GM10248 (cell line): ENCODE measurements at regions of chr2 and their contacts with region 1.

Region 1: DNA sequence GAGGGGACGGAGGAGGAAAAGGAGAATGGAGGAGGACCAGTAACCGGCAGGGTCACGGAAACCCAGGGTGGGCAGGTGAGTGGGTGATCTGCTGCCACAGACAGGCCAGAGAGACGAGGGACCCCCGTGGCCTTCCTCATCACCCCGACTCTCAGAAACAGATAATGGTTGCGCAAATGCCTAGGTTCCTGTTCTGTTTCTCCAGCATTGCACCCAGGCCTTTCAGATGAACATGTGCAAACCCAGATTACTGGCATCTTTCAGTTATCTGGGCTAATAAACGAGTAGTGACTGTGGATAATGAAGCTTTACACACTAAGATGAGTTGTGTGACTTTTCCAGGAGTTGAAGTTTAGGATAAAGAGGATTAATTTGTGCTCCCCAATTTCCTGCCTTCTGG is 46.5 kb downstream of the TET3 start:
- DNase-seq: no peak
- CTCF ChIP-seq: no peak

Region 2: GRCh38 chr2:74020702-74021406 is 10.4 kb before region 1 on chr2:
- CTCF ChIA-PET with region 1: interaction called, 30 read pairs
- POLR2A ChIA-PET with region 1: interaction called, 5 read pairs
- DNase-seq: no peak
- CTCF ChIP-seq: no peak